ENCODE measurements at regions of chr5 and their contacts with region 1.

Region 1: DNA sequence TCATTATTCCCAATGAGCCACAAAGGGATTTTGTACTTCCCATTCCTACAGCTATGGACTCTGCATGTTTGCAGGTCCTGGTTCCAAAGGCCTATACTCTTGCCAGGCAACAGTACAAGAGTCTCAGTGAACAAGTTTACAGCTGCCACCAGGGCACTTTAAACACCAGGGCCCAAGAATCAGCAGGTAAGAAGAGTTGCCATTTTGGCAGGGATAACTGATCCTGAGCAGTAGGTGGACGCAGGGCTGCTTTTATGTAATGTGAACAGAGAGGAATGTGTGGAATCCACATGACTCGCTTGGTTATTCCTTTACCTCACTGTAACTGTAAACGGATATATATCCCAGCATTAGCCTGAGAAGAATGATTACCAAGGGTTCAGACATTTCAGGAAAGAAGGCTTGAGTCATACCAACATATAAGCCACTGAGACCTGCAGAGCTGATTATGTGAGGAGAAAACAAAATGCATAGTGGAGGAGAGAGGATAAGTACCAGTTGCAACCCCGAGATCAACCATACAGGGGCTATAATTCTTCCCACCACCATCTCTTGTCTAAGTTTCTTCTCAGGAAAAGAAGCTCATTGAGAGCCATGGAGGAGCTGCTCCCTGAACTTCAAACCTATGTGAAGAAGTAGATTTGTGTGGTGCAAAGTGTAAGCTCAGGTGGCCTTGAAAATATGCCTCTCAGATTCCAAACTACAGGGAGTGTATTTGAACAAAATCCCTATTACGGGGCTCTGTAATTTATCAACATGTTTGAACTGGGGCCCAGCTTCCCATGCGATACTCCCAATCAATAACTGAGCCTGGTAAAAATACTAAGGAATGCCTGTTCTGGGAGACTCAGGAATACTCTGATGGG is 24.6 kb downstream of the RAPGEF6 start:
- DNase-seq: peak; percentile 18 to 70
- H3K4me3 ChIP-seq: no peak overlapping the region
- H3K27ac ChIP-seq: no peak overlapping the region
- H3K4me1 ChIP-seq: peaks cover 11% of the 10 kb centered on the region; the same call in 1 of the 2 replicates
- H3K27me3 ChIP-seq: no peaks in the 10 kb centered on the region
- CTCF ChIP-seq: no peak

Region 2: GRCh38 chr5:130624805-130625204 is 985.6 kb before region 1 on chr5:
- CTCF ChIA-PET with region 1: no interaction called
- POLR2A ChIA-PET with region 1: no interaction called
- intact Hi-C with region 1: no loop called
- DNase-seq: no peak
- H3K4me3 ChIP-seq: no peak overlapping the region
- H3K27ac ChIP-seq: no peak overlapping the region
- H3K4me1 ChIP-seq: no peaks in the 10 kb centered on the region
- H3K27me3 ChIP-seq: no peaks in the 10 kb centered on the region
- CTCF ChIP-seq: no peak

Region 3: GRCh38 chr5:131634996-131635754 is 24.7 kb after region 1 on chr5 and contains the start of gene RAPGEF6:
- CTCF ChIA-PET with region 1: no interaction called
- POLR2A ChIA-PET with region 1: no interaction called
- intact Hi-C with region 1: loop called (anchors 2 kb)
- DNase-seq: peak; percentile 93 to 99
- H3K4me3 ChIP-seq: peak within 1 kb of the TSS; percentile 66
- H3K27ac ChIP-seq: peak within 1 kb of the TSS; percentile 96
- H3K4me1 ChIP-seq: peaks cover 38% of the 10 kb centered on the region
- H3K27me3 ChIP-seq: no peaks in the 10 kb centered on the region
- CTCF ChIP-seq: no peak
- total RNA-seq, gene RAPGEF6: 17.1 and 21.9 TPM in 2 replicates

Region 4: GRCh38 chr5:132156413-132156812 is 546.0 kb after region 1 on chr5:
- CTCF ChIA-PET with region 1: no interaction called
- POLR2A ChIA-PET with region 1: no interaction called
- intact Hi-C with region 1: no loop called
- DNase-seq: no peak
- H3K4me3 ChIP-seq: no peak overlapping the region
- H3K27ac ChIP-seq: no peak overlapping the region
- H3K4me1 ChIP-seq: no peaks in the 10 kb centered on the region
- H3K27me3 ChIP-seq: 0 out of 2 replicates have a peak, but pooled peaks cover 2% of the 10 kb centered on the region
- CTCF ChIP-seq: no peak